PC-9 (cell line): ENCODE measurements at regions of chr2 and their contacts with region 1.

Region 1: GRCh38 chr2:55175254-55176025 is 56.7 kb downstream of the CLHC1 start:
- DNase-seq: peak in 1 of 2 experiments; percentile 69
- H3K4me3 ChIP-seq: no peak overlapping the region
- H3K27ac ChIP-seq: peak overlapping the region; percentile 27
- H3K4me1 ChIP-seq: peaks cover 6% of the 10 kb centered on the region
- H3K27me3 ChIP-seq: no peaks in the 10 kb centered on the region
- CTCF ChIP-seq: peak; percentile 79

Region 2: GRCh38 chr2:54665436-54665856 is 510.0 kb before region 1 on chr2:
- CTCF ChIA-PET with region 1: no interaction called
- POLR2A ChIA-PET with region 1: no interaction called
- intact Hi-C with region 1: loop called (anchors 1 kb)
- DNase-seq: peak in 1 of 2 experiments; percentile 34
- H3K4me3 ChIP-seq: no peak overlapping the region
- H3K27ac ChIP-seq: no peak overlapping the region
- H3K4me1 ChIP-seq: peaks cover 8% of the 10 kb centered on the region; the same call in 1 of the 2 replicates
- H3K27me3 ChIP-seq: no peaks in the 10 kb centered on the region
- CTCF ChIP-seq: peak; percentile 76

Region 3: GRCh38 chr2:54899576-54900200 is 275.8 kb before region 1 on chr2:
- CTCF ChIA-PET with region 1: interaction called, 13 read pairs
- POLR2A ChIA-PET with region 1: no interaction called
- intact Hi-C with region 1: no loop called
- DNase-seq: peak in 1 of 2 experiments; percentile 53
- H3K4me3 ChIP-seq: no peak overlapping the region
- H3K27ac ChIP-seq: no peak overlapping the region
- H3K4me1 ChIP-seq: peaks cover 23% of the 10 kb centered on the region
- H3K27me3 ChIP-seq: no peaks in the 10 kb centered on the region
- CTCF ChIP-seq: peak; percentile 76

Region 4: GRCh38 chr2:54942373-54942772 is 233.1 kb before region 1 on chr2:
- CTCF ChIA-PET with region 1: interaction called, 11 read pairs
- POLR2A ChIA-PET with region 1: interaction called, 38 read pairs
- intact Hi-C with region 1: no loop called
- DNase-seq: no peak
- H3K4me3 ChIP-seq: no peak overlapping the region
- H3K27ac ChIP-seq: no peak overlapping the region
- H3K4me1 ChIP-seq: peaks cover 18% of the 10 kb centered on the region
- H3K27me3 ChIP-seq: no peaks in the 10 kb centered on the region
- CTCF ChIP-seq: no peak

Region 5: DNA sequence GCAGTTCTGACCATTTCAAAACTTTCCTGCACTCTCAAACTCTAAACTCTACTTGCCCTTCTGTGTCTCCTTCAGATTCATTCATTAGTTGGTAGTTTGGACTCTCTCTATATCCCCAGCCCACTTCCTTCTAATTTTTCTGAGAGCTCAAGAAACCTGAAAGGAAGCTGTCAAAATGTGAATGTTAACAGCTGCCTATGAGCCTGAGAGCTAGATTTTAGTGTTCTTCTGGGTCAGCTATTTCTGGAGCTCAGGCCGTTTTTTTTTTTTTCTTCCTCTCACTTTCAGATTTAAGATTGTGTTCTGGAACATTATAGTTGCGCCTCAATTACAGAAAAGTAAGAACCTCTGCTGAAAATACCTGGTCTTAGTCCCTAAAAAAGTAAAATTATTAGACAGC is 198.3 kb before region 1 on chr2:
- CTCF ChIA-PET with region 1: no interaction called
- POLR2A ChIA-PET with region 1: no interaction called
- intact Hi-C with region 1: no loop called
- DNase-seq: no peak
- H3K4me3 ChIP-seq: no peak overlapping the region
- H3K27ac ChIP-seq: no peak overlapping the region
- H3K4me1 ChIP-seq: peaks cover 26% of the 10 kb centered on the region
- H3K27me3 ChIP-seq: no peaks in the 10 kb centered on the region
- CTCF ChIP-seq: no peak

Region 6: GRCh38 chr2:55014962-55015939 is 160.2 kb before region 1 on chr2:
- CTCF ChIA-PET with region 1: interaction called, 6 read pairs
- POLR2A ChIA-PET with region 1: no interaction called
- intact Hi-C with region 1: loop called (anchors 1 kb)
- DNase-seq: peak; percentile 40 to 76
- H3K4me3 ChIP-seq: peak overlapping the region; percentile 9
- H3K27ac ChIP-seq: peak overlapping the region; percentile 35
- H3K4me1 ChIP-seq: peaks cover 89% of the 10 kb centered on the region
- H3K27me3 ChIP-seq: no peaks in the 10 kb centered on the region
- CTCF ChIP-seq: peak; percentile 83

Region 7: DNA sequence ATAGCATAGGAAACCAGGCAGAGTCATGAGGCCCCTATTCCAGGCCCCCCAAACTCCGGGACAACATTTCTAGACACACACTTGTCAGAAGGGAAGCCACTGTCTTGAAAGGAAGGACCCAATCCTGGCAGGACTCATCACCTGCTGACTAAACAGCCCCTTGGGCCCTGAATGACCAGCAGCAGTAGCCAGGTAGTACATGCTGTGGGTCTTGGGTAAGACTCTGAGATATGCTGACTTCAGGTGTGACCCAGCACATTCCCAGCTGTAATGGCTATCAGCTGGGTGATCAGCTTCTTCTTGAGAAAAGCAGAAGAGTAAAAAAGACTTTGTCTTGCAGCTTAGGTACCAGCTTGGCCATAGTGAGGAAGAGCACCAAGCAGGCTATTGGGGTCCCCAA is 21.1 kb after region 1 on chr2:
- CTCF ChIA-PET with region 1: no interaction called
- POLR2A ChIA-PET with region 1: no interaction called
- intact Hi-C with region 1: no loop called
- DNase-seq: no peak
- H3K4me3 ChIP-seq: no peak overlapping the region
- H3K27ac ChIP-seq: no peak overlapping the region
- H3K4me1 ChIP-seq: no peaks in the 10 kb centered on the region
- H3K27me3 ChIP-seq: no peaks in the 10 kb centered on the region
- CTCF ChIP-seq: no peak

Region 8: GRCh38 chr2:55707751-55708150 is 532.3 kb after region 1 on chr2:
- CTCF ChIA-PET with region 1: no interaction called
- POLR2A ChIA-PET with region 1: interaction called, 15 read pairs
- intact Hi-C with region 1: no loop called
- DNase-seq: no peak
- H3K4me3 ChIP-seq: no peak overlapping the region
- H3K27ac ChIP-seq: no peak overlapping the region
- H3K4me1 ChIP-seq: no peaks in the 10 kb centered on the region
- H3K27me3 ChIP-seq: no peaks in the 10 kb centered on the region; the same call in 1 of the 2 replicates
- CTCF ChIP-seq: no peak